ENCODE measurements at regions of chr16 and their contacts with region 1.

Region 1: DNA sequence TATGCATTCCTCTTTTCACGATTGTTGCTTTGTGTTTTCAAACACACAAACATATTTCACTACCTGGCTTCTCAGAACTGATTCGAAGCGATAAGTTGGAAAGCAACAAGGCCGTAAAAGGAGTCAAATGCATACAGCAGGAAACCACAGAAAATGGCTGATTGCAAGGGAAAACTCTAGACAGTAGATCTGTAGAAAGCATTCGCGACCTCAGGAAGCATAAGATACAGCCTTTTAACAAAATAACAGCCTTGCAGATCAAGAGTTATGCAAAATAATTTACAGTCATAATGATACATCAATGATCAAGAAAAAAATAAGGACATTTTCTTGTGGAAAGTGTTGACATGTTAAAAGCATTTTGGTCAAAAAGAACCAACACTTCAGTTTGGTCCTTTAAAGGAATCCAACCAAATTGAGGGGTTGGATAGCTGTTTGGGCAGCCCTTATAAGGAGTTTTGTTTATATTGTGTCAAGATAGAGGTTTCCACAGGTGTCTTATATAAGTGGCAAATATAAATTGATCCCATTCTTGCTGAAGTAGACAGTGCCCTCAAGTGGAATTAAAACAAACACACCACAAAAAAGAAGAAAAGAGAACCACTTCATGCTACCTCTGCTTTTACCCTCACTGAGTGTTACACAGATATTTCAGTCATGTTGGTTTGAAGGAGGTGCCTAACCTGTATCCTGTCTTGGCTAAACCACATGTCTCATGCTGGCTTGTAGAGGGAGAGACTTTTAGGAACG is 5.5 kb downstream of the CYLD start:
- DNase-seq: peak in 3 of 9 experiments; percentile 21 to 80 (median 67)
- ATAC-seq: peak; percentile 68
- H3K4me3 ChIP-seq: peak overlapping the region; percentile 12 to 23
- H3K4me3 Mint-ChIP-seq: peak overlapping the region; percentile 80
- H3K27ac ChIP-seq: peak overlapping the region; percentile 47 to 99
- H3K27ac Mint-ChIP-seq: peak overlapping the region; percentile 94
- H3K4me1 ChIP-seq: peaks cover 65% of the 10 kb centered on the region
- H3K4me1 Mint-ChIP-seq: peaks cover 71% of the 10 kb centered on the region
- H3K27me3 ChIP-seq: no peaks in the 10 kb centered on the region
- H3K27me3 Mint-ChIP-seq: no peaks in the 10 kb centered on the region
- CTCF ChIP-seq: peak; percentile 67

Region 2: DNA sequence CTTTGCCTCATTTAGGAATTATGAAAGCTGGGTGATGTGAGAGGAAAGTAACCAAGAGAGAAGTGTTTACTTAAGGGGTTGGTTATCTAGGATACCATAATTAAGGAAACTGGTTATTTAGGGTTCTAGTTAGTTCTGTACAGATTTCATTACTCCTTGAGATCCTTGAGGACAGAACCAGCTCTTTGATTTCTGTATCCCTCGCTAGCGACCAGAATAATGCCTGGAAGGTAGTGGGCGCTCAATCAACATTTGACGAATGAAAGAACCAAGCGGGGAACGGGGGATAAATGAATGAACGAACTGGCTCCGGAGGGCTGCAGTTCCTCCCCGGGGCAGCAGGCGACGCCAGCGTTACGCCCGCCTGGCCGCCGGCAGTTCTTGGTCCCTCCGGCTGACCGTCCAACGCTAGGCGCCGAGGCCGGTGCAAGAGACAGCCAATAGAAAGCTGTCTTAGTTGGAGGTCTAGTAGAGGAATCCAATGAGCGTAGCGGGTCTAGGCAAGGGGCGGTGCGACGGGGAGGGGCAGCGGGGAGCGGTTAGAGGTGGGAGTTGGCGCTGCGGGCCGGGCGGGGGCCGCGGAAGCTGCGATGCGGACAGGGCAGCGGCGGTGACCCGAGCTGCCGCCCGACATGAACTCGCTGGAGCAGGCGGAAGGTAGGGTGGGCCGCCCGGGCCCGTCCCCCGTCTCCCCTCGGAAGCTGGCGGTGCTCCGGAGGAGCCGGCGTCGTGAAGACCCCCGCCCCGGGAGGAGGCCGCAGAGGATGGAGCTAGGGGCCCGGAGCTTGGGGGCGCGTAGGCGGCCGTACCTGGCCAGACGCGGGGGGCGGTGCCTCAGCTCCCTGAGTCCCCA is 722.5 kb before region 1 on chr16 and contains the start of gene CNEP1R1:
- CTCF ChIA-PET with region 1: interaction called, 3 read pairs
- POLR2A ChIA-PET with region 1: no interaction called
- intact Hi-C with region 1: loop called (anchors 2 kb)
- DNase-seq: peak; percentile 86 to 97 (median 91)
- ATAC-seq: peak; percentile 93
- H3K4me3 ChIP-seq: peak within 1 kb of the TSS; percentile 74 to 79
- H3K4me3 Mint-ChIP-seq: peak within 1 kb of the TSS; percentile 97
- H3K27ac ChIP-seq: peak within 1 kb of the TSS; percentile 49 to 65
- H3K27ac Mint-ChIP-seq: peak within 1 kb of the TSS; percentile 94
- H3K4me1 ChIP-seq: peaks cover 17% of the 10 kb centered on the region
- H3K4me1 Mint-ChIP-seq: peaks cover 27% of the 10 kb centered on the region
- H3K27me3 ChIP-seq: no peaks in the 10 kb centered on the region
- H3K27me3 Mint-ChIP-seq: no peaks in the 10 kb centered on the region
- CTCF ChIP-seq: peak; percentile 99
- total RNA-seq, gene CNEP1R1: 37.6 to 41.0 TPM

Region 3: GRCh38 chr16:50326949-50327402 is 420.4 kb before region 1 on chr16:
- CTCF ChIA-PET with region 1: interaction called, 8 read pairs
- POLR2A ChIA-PET with region 1: no interaction called
- intact Hi-C with region 1: loop called (anchors 5 to 10 kb)
- DNase-seq: peak; percentile 32 to 92 (median 76)
- ATAC-seq: peak; percentile 91
- H3K4me3 ChIP-seq: no peak overlapping the region
- H3K4me3 Mint-ChIP-seq: no peak overlapping the region
- H3K27ac ChIP-seq: peak overlapping the region in 1 of 2 experiments; percentile 60
- H3K27ac Mint-ChIP-seq: peak overlapping the region; percentile 88
- H3K4me1 ChIP-seq: peaks cover 24% of the 10 kb centered on the region
- H3K4me1 Mint-ChIP-seq: peaks cover 74% of the 10 kb centered on the region
- H3K27me3 ChIP-seq: no peaks in the 10 kb centered on the region
- H3K27me3 Mint-ChIP-seq: no peaks in the 10 kb centered on the region
- CTCF ChIP-seq: peak; percentile 76

Region 4: GRCh38 chr16:50665128-50665878 is 82.1 kb before region 1 on chr16:
- CTCF ChIA-PET with region 1: interaction called, 117 read pairs
- POLR2A ChIA-PET with region 1: interaction called, 8 read pairs
- intact Hi-C with region 1: loop called in 1 of 2 experiments (anchors 1 kb)
- DNase-seq: peak; percentile 70 to 92 (median 83)
- ATAC-seq: peak; percentile 73
- H3K4me3 ChIP-seq: peak overlapping the region; percentile 39 to 57
- H3K4me3 Mint-ChIP-seq: peak overlapping the region; percentile 82
- H3K27ac ChIP-seq: peak overlapping the region in 1 of 2 experiments; percentile 46
- H3K27ac Mint-ChIP-seq: no peak overlapping the region
- H3K4me1 ChIP-seq: peaks cover 21% of the 10 kb centered on the region
- H3K4me1 Mint-ChIP-seq: peaks cover 36% of the 10 kb centered on the region
- H3K27me3 ChIP-seq: no peaks in the 10 kb centered on the region
- H3K27me3 Mint-ChIP-seq: no peaks in the 10 kb centered on the region
- CTCF ChIP-seq: peak; percentile 93

Region 5: DNA sequence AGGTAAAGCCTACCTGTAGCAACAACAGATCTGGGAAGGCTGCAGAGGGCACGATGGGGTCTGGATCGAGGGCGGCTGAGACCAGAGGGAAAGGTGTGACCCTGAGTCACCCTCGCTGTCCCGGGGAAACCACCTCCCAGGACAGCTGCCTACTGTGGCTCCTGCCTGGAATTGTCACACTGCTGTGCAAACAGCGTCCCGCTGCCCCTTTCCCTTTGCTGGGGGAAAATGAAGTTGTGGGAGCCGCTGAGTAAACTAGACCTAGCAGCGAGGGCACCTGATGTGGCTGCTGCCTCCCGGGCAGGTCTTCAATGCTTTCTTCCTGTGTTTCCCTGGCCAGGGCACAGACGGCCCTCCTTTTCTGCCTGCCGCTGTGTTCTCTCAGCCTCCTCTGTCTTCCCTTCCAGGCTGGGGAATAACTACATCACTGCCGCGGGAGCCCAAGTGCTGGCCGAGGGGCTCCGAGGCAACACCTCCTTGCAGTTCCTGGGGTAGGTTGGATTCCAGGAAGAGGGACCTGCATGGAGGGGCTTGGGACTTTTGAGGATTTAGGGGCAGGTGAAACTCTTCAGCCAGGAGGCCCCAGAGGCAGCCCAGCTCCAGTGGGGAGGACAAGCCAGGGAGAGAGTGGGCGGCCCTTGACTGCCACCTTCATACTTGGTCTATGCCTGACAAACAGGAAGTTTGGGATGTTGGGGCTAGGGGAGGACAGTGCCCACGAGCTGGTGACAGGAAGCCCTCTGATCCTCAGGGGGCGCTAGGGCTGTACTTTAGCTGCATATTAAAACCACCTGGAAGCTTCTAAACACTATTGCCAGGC is 27.7 kb before region 1 on chr16:
- CTCF ChIA-PET with region 1: interaction called, 24 read pairs
- POLR2A ChIA-PET with region 1: interaction called, 10 read pairs
- intact Hi-C with region 1: loop called (anchors 1 to 2 kb)
- DNase-seq: peak in 6 of 9 experiments; percentile 23 to 71 (median 46)
- ATAC-seq: peak; percentile 67
- H3K4me3 ChIP-seq: no peak overlapping the region
- H3K4me3 Mint-ChIP-seq: no peak overlapping the region
- H3K27ac ChIP-seq: no peak overlapping the region
- H3K27ac Mint-ChIP-seq: no peak overlapping the region
- H3K4me1 ChIP-seq: peaks cover 26% of the 10 kb centered on the region
- H3K4me1 Mint-ChIP-seq: peaks cover 37% of the 10 kb centered on the region
- H3K27me3 ChIP-seq: no peaks in the 10 kb centered on the region
- H3K27me3 Mint-ChIP-seq: no peaks in the 10 kb centered on the region
- CTCF ChIP-seq: peak; percentile 15

Region 6: DNA sequence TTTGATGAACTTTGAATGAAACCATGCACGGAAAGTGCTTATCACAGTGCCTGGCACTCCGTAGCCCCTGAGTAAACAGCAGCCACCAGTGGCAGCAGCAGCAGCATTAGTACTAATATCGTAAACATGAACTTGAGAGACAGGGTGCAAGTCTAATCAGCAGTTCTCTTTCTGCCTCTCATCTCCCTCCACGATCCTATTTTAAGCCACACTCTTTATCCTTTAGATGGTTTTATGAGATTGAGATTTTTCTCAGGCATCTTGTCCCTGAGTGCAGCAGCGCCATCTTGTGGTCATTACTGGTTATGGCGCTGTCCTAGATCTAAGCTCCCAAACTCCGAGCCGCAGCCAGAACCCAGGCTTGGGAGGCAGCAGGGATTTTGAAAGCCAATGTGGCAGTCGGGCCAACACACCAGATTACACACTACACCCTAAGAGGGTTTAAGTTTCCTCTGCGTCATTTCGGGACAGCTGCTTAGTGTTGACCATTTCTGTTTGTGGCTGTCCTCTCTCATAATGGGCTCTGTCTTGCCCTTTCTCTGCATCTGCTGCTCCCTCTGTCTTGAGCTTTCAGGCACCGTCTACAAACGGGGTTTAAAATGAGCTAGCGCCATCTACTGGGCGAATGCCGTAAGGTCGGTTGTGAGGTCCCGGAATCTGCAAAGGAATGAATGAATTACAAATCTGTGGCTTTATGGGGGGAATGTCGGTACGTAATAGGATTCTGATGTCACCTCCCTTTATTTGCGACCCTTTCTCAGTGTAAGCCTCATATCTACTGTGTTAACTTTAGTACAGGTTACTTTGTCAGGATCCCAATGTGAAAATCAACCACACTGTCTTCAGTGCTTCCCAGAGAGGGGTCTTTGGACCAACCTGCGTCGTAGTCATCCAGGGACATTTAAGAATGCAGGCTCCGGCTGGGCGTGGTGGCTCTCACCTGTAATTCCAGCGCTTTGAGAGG is 59.0 kb after region 1 on chr16:
- CTCF ChIA-PET with region 1: interaction called, 10 read pairs
- POLR2A ChIA-PET with region 1: interaction called, 3 read pairs
- intact Hi-C with region 1: loop called in 1 of 2 experiments (anchors 1 kb)
- DNase-seq: peak; percentile 69 to 93 (median 86)
- ATAC-seq: peak; percentile 96
- H3K4me3 ChIP-seq: peak overlapping the region; percentile 36 to 38
- H3K4me3 Mint-ChIP-seq: peak overlapping the region; percentile 81
- H3K27ac ChIP-seq: no peak overlapping the region
- H3K27ac Mint-ChIP-seq: peak overlapping the region; percentile 88
- H3K4me1 ChIP-seq: peaks cover 3% of the 10 kb centered on the region
- H3K4me1 Mint-ChIP-seq: peaks cover 11% of the 10 kb centered on the region
- H3K27me3 ChIP-seq: no peaks in the 10 kb centered on the region
- H3K27me3 Mint-ChIP-seq: no peaks in the 10 kb centered on the region
- CTCF ChIP-seq: peak; percentile 96

Measured in CD8-positive, alpha-beta T cell (primary cell).